Gastrocnemius medialis (tissue), 4 donors: ENCODE measurements at regions of chr18 and their contacts with region 1.

Region 1: GRCh38 chr18:3245853-3246634 is 1.6 kb upstream of the MYL12A start:
- DNase-seq: peak; percentile 87 to 91
- ATAC-seq: peak; percentile 60
- H3K4me3 ChIP-seq: peak overlapping the region; percentile 84 to 98 (median 94)
- H3K27ac ChIP-seq: peak overlapping the region; percentile 99
- H3K4me1 ChIP-seq: peaks cover 23 to 42% of the 10 kb centered on the region in 2 donors
- H3K27me3 ChIP-seq: no peaks in the 10 kb centered on the region
- CTCF ChIP-seq: peak in 4 of 5 experiments; percentile 90 to 98 (median 96)
- POLR2A ChIP-seq: peak in 1 of 2 donors; percentile 8

Region 2: DNA sequence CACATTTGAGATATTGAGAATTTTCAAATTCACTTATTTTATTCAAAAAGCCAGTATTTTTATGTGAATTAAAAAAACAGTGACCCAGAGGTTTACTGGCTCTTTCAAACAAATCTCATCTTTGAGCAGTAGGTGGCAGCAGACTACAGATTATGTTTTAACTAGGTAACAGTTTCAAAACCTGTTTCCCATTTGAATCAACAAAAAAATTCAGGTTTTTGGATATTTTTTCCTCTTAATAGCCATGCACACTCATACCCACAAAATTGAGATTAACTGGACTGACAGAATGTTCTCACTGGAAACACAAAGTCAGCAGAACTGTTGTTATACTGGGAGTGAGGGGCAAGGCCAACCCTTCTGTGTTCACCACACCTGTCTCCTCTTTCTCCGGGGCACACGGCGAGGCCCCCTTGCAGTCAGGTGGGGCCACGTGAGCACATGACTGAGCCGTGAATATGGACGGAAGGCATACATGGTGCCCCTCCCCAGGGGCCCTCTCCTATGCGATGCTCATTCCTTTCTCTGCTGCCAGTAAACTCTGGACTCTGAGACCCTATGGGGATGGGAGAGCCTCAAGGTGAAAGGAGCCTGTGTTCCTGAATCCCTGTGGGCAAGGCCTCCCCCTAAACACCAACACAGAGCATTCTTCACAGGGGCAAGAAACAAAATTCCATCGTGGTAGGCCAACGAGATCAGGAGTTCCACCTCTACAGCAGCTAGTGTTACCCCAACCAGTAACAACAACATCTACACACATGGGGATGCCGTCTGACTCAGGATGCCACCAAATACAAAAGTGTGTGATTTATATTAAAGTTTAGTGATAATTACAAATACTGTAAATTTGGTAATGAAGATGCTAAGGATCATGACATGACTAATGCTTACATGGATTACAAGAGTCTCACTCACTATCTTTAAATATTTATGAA is 313.5 kb before region 1 on chr18:
- in situ Hi-C with region 1: loop called (anchors 5 to 10 kb)
- intact Hi-C with region 1: loop called (anchors 1 kb)
- DNase-seq: no peak
- ATAC-seq: peak; percentile 26 to 64
- H3K4me3 ChIP-seq: no peak overlapping the region
- H3K27ac ChIP-seq: no peak overlapping the region
- H3K4me1 ChIP-seq: no peaks in the 10 kb centered on the region
- H3K27me3 ChIP-seq: no peaks in the 10 kb centered on the region
- CTCF ChIP-seq: peak; percentile 54 to 89 (median 80)
- POLR2A ChIP-seq: no peak

Region 3: DNA sequence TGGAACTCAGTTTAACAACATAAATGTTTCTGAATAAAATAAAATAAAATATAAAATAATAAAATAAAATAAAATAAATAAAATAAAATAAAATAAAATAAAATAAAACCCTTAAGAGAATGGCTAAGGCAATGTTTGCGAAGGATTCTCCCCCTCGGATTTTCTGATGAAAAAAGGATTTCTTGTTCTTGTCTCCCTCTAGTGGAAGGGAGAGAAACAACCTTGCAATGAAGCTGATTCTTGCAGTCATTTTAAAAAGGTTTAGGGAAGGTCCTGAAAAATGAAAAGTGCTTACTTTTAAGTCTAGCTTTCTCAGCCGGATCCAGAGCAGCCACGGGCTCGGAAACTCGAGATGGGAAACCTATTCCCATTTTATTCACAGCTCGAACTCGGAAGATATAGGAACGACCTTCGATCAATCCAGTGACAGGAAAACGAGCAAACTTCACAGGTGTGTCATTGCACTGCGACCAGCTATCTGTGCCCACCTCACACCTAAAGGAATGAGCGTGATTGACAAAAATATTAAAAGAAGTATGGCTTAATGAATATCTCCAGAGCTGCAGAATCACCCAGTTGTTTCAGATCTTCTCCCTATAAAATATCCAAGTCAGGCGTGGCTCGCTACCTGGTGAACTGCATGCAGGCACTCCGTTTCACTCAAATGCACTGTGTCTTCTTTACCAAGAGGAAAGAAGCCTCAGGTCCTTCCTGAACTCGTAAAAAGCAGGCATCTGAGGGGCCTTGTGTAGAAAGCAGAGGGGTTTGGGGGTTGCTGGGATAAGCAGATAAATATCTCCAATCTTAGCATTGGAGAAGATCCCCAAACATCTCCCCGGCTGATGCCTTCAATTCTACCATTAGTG is 94.4 kb before region 1 on chr18:
- in situ Hi-C with region 1: loop called in 3 of 4 experiments (anchors 5 to 10 kb)
- intact Hi-C with region 1: loop called (anchors 1 kb)
- DNase-seq: no peak
- ATAC-seq: no peak
- H3K4me3 ChIP-seq: no peak overlapping the region
- H3K27ac ChIP-seq: peak overlapping the region in 3 of 4 donors; percentile 10 to 49 (median 33)
- H3K4me1 ChIP-seq: peaks cover 12 to 18% of the 10 kb centered on the region in 2 donors
- H3K27me3 ChIP-seq: no peaks in the 10 kb centered on the region
- CTCF ChIP-seq: peak; percentile 45 to 84 (median 61)
- POLR2A ChIP-seq: no peak

Region 4: GRCh38 chr18:3194947-3195612 is 51.0 kb before region 1 on chr18:
- in situ Hi-C with region 1: no loop called
- intact Hi-C with region 1: loop called (anchors 2 kb)
- DNase-seq: peak; percentile 46 to 53
- ATAC-seq: peak; percentile 59 to 64
- H3K4me3 ChIP-seq: peak overlapping the region; percentile 12 to 31 (median 18)
- H3K27ac ChIP-seq: peak overlapping the region; percentile 81 to 90 (median 86)
- H3K4me1 ChIP-seq: peaks cover 64 to 73% of the 10 kb centered on the region in 2 donors
- H3K27me3 ChIP-seq: no peaks in the 10 kb centered on the region
- CTCF ChIP-seq: no peak
- POLR2A ChIP-seq: no peak

Region 5: DNA sequence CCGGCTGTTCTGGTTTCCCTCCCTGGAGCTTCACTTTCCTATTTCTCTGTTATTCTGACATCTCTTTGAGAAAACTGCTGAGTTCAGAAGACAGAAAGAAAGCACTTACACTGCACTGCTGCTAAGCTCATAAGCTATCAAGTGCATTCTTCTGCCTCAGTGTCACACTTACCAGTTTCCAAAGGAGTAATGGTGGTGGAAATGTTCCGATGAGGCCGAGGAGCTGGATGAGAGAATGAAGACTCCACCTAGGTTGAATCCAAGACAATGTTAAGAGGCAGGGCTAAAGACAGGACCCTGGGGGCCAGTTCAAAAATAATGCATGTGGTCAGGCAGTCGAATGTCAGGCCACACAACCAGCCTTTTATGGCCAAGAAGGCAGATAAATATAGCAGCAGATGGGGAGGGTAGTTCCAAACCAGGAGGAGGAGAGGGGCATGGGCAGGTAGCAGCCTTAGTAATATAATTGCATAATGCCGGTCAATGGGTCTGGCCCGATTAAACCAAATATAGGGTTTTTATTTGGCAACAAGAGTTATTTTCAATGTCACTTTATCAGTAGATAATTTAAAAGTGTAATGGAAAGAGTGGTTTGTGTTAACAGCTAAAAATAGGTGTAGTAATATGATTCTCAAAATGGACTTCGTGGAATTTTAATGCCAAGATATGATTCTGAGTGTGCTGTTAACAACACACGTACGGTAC is 26.3 kb before region 1 on chr18 and contains the start of gene MYOM1:
- in situ Hi-C with region 1: no loop called
- intact Hi-C with region 1: loop called (anchors 1 kb)
- DNase-seq: peak; percentile 35 to 60
- ATAC-seq: peak; percentile 67 to 73
- H3K4me3 ChIP-seq: peak within 1 kb of the TSS; percentile 50 to 67 (median 58)
- H3K27ac ChIP-seq: peak within 1 kb of the TSS; percentile 81 to 90 (median 89)
- H3K4me1 ChIP-seq: peaks cover 35 to 36% of the 10 kb centered on the region in 2 donors
- H3K27me3 ChIP-seq: no peaks in the 10 kb centered on the region
- CTCF ChIP-seq: no peak
- POLR2A ChIP-seq: peak in 1 of 2 donors; percentile 67
- total RNA-seq, gene MYOM1: 245 to 307 (median 273) TPM